ENCODE measurements at regions of chr2 and their contacts with region 1.

Region 1: DNA sequence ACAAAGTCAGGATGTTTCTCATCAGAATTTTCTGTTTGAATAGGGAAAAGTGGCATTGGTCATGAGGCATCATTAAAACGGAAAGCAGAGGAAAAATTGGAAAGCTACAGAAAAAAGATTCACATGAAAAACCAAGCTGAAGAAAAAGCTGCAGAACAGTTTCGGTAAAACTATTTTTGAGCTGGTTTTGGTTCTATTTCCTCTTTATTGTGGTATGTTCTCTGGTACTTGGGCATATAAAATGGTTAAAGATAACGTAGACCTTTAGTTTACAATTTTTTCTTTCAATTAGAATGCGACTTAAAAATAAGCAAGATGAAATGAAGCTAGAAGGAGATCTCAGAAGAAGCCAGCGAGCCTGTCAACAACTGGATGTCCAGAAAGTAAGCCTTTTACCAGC is 7.6 kb downstream of the GPATCH11 start:
- DNase-seq: peak; percentile 49
- ATAC-seq: peak; percentile 56
- H3K4me3 ChIP-seq: peak overlapping the region; percentile 68; the same call in 1 of the 2 replicates
- H3K27ac ChIP-seq: peak overlapping the region; percentile 67
- H3K4me1 ChIP-seq: peaks cover 32% of the 10 kb centered on the region
- H3K27me3 ChIP-seq: no peaks in the 10 kb centered on the region
- CTCF ChIP-seq: no peak
- EP300 ChIP-seq: peak; percentile 65 to 72; a peak in 3 of 4 replicates
- POLR2A ChIP-seq: no peak
- RAD21 ChIP-seq: 0 out of 2 replicates have a peak, but pooled peaks have one; percentile 2

Region 2: DNA sequence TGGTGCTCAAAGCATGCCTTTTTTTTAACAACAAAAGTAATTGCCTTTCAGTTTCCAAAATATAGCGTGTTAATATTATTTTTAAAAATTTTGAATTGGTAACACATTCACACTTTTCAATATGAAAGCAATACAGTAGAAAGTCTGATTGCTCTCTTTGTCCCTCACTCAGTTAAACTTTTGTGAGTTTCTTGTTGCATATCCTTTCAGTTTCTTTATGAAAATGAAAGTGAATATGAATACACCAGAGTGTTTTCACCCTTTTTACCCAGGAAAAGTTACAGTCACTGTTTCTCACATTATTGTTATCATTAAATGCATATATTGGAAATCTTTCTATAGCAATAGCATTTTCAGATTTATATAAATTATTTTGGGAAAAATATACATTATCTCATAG is 1113.7 kb before region 1 on chr2:
- CTCF ChIA-PET with region 1: no interaction called
- POLR2A ChIA-PET with region 1: no interaction called
- RAD21 ChIA-PET with region 1: no interaction called
- SMC1A ChIA-PET with region 1: no interaction called
- in situ Hi-C with region 1: no loop called
- intact Hi-C with region 1: no loop called
- DNase-seq: no peak
- ATAC-seq: peak; percentile 88
- H3K4me3 ChIP-seq: no peak overlapping the region
- H3K27ac ChIP-seq: no peak overlapping the region
- H3K4me1 ChIP-seq: no peaks in the 10 kb centered on the region
- H3K27me3 ChIP-seq: no peaks in the 10 kb centered on the region
- CTCF ChIP-seq: no peak
- EP300 ChIP-seq: no peak
- POLR2A ChIP-seq: no peak
- RAD21 ChIP-seq: no peak

Region 3: DNA sequence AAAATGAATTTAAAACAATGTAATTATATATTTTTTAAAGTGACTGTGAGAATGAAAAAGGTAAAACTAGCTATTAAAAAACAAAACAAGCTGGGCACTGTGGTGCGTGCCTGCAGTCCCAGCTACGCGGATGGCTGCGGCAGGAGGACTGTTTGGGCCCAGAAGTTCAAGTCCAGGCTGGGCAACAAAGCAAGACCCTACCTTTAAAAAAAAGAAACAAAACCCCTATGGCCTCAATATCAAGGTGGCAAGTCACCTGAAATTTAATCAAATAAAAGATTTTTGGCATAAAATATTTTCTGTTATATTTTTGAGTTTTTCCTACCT is 78.6 kb before region 1 on chr2:
- CTCF ChIA-PET with region 1: no interaction called
- POLR2A ChIA-PET with region 1: no interaction called
- RAD21 ChIA-PET with region 1: no interaction called
- SMC1A ChIA-PET with region 1: interaction called, 10 read pairs
- in situ Hi-C with region 1: no loop called
- intact Hi-C with region 1: no loop called
- DNase-seq: no peak
- ATAC-seq: peak; percentile 57
- H3K4me3 ChIP-seq: no peak overlapping the region
- H3K27ac ChIP-seq: no peak overlapping the region
- H3K4me1 ChIP-seq: peaks cover 30% of the 10 kb centered on the region
- H3K27me3 ChIP-seq: no peaks in the 10 kb centered on the region
- CTCF ChIP-seq: no peak
- EP300 ChIP-seq: no peak
- POLR2A ChIP-seq: no peak
- RAD21 ChIP-seq: no peak

Region 4: DNA sequence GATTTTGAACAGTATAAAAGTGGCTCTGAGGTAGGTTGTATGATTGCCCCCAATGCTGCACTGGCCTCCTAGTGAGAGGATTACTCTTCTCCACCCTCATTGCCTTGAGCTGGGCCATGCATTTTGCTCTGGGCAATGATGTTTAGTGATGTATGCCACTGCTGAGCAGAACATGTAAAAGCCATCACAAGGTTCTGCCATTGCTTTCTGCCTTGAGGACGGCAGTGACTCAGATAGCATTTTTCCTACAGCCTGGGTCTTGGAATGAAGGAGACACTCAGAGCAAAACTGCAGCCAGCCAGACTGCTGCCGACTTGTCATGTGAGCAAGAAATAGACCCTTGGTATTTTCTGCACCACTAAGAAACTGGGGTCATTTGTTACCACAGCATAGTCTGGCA is 20.1 kb after region 1 on chr2:
- CTCF ChIA-PET with region 1: no interaction called
- POLR2A ChIA-PET with region 1: no interaction called
- RAD21 ChIA-PET with region 1: no interaction called
- SMC1A ChIA-PET with region 1: no interaction called
- in situ Hi-C with region 1: no loop called
- intact Hi-C with region 1: no loop called
- DNase-seq: no peak
- ATAC-seq: no peak
- H3K4me3 ChIP-seq: no peak overlapping the region
- H3K27ac ChIP-seq: no peak overlapping the region
- H3K4me1 ChIP-seq: no peaks in the 10 kb centered on the region
- H3K27me3 ChIP-seq: no peaks in the 10 kb centered on the region
- CTCF ChIP-seq: no peak
- EP300 ChIP-seq: no peak
- POLR2A ChIP-seq: no peak
- RAD21 ChIP-seq: no peak

Measured in GM12878 (cell line).